ENCODE measurements at regions of chr1 and their contacts with region 1.

Region 1: GRCh38 chr1:243255791-243256512 is at the start of gene SDCCAG8:
- DNase-seq: peak; percentile 99
- H3K4me3 ChIP-seq: peak within 1 kb of the TSS; percentile 93
- H3K27ac ChIP-seq: peak within 1 kb of the TSS; percentile 85
- H3K4me1 ChIP-seq: peaks cover 33% of the 10 kb centered on the region
- CTCF ChIP-seq: no peak
- total RNA-seq, gene SDCCAG8: 13.4 and 18.1 TPM in 2 replicates

Region 2: DNA sequence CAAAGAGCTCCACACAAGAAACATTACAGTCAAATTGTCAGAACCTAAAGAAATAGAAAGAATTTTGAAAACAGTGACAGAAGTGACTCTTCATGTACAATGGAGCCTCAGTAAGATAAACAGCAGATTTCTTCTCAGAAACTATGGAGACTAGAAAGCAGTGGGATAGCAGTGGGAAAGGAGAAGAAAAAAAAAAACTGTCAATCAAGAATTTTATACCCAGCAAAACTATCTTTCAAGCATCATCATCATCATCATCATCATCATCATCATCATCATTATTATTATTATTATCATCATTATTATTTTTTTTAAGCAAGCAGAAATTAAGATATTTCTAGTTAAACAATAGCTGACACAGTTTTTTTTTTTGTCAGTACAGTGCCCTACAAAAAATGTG is 25.0 kb before region 1 on chr1:
- CTCF ChIA-PET with region 1: interaction called, 6 read pairs
- POLR2A ChIA-PET with region 1: interaction called, 11 read pairs
- intact Hi-C with region 1: no loop called
- DNase-seq: peak; percentile 46
- H3K4me3 ChIP-seq: no peak overlapping the region
- H3K27ac ChIP-seq: no peak overlapping the region
- H3K4me1 ChIP-seq: peaks cover 2% of the 10 kb centered on the region
- CTCF ChIP-seq: no peak

Region 3: DNA sequence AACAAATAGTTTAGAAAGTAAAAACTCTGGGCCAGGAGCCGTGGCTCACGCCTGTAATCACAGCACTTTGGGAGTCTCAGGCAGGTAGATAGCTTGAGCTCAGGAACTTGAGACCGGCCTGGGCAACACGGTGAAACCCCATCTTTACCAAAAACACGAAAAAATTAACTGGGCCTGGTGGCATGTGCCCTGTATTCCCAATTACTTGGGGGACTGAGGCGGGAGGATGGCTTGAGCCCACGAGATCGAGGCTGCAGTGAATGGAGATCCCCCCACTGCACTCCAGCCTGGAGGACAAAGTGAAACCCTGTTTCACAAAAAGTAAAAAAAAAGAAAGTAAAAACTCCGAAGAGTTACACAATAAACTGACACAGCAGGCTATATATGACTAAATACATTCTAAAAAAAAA is 11.5 kb before region 1 on chr1:
- CTCF ChIA-PET with region 1: interaction called, 3 read pairs
- POLR2A ChIA-PET with region 1: interaction called, 37 read pairs
- intact Hi-C with region 1: no loop called
- DNase-seq: no peak
- H3K4me3 ChIP-seq: peak overlapping the region; percentile 37
- H3K27ac ChIP-seq: no peak overlapping the region
- H3K4me1 ChIP-seq: peaks cover 33% of the 10 kb centered on the region
- CTCF ChIP-seq: no peak

Region 4: DNA sequence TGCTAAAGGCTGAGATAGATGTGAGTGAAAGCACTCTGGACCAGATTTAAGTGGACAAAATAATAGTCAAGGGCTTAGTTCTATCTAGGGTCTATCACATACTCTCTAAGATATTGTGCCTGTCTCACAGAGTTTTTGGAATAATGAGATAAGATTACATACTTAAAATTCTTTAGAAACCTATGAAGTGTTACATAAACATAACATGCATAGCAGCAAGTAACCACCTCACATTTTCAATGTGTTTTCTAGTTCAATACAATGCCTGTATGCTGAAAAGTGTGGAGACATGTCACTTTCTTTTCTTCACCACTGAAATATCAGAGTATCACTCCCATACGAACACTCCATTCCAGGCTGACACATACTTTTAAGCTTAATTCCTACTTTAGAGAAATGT is 16.0 kb after region 1 on chr1:
- CTCF ChIA-PET with region 1: interaction called, 3 read pairs
- POLR2A ChIA-PET with region 1: interaction called, 14 read pairs
- intact Hi-C with region 1: no loop called
- DNase-seq: no peak
- H3K4me3 ChIP-seq: no peak overlapping the region
- H3K27ac ChIP-seq: no peak overlapping the region
- H3K4me1 ChIP-seq: peaks cover 29% of the 10 kb centered on the region
- CTCF ChIP-seq: no peak

Region 5: DNA sequence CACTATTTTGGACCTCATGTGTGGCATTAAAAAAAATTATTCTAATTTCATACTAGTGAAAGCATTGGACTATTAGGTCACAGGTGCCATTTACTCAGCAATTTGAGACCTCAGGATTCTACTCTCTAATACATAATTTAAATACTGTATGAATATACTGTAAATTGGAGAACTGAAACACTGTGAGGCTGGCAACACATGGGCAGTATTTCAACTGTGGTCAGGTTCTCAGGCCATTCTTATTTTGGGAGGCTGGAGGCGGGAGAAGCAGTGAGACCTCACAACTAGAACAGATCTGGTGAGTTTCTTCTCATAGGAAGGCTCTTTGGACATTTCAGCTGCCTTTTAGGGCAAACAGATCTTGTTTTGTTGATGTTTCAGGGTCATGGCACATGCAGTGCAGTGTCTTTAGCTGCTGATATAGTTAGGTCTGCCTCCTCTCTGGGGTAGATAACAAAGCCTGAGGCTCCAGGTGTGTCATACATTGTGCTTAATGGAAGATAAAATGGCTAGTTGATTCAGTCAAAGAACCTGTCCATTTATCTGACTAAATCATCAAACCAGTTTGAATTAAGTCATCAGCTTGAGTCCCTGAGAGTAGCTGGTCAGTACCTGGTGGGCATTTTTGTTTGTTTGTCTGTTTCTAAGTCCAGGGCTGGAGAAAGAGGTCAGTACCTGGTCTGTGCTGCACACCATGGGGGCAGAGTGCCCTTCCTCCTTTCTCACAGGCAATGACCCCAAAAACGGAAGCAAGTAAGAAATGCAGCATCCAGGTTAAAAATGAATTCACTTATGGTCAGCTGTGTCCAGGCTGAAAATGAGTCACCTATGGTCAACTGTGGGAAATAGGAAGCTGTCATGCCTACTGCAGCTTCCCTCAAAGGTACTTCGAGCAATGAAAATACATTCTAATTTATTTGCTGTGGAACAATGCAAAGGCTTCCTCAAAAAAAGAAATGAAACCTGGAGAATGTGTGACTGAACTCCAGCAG is 216.1 kb after region 1 on chr1:
- CTCF ChIA-PET with region 1: no interaction called
- POLR2A ChIA-PET with region 1: no interaction called
- intact Hi-C with region 1: no loop called
- DNase-seq: no peak
- H3K4me3 ChIP-seq: no peak overlapping the region
- H3K27ac ChIP-seq: no peak overlapping the region
- H3K4me1 ChIP-seq: peaks cover 7% of the 10 kb centered on the region
- CTCF ChIP-seq: no peak

Region 6: DNA sequence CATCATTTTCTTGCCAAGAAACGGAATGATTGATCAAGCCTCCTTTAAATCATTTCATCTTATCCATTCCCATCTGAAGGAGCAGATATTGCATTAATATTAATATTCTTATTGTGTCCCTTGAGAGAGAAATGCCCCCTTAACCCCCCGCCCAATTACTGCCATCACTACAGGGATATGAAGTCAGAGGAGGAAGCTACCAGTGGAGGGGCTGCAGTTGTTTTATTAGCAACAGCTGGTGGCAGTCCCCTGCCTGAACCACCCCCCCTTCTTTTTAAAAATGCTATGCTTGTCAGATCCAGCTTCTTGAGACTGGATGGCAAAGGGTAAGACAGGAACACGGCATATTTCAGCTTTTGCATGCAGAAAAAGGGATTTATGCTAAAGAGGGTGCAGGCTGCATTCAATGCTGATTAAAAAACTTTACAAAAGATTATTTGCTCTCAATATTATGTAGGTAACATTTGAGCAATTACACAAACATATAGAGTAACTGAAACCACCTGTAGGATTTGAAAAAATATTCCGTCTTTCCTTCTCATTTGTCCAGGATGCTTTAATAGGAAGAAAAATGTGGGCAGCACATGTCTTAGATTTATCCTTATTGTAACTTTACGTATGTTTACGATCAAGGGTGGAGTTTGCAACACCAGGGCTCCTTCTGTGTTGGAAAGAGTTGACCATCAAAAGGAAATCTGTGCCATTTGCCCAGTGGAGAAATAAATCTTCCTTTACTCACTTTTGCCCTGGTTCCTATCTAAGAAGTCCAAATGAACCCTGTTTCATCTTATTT is 872.8 kb after region 1 on chr1:
- CTCF ChIA-PET with region 1: no interaction called
- POLR2A ChIA-PET with region 1: no interaction called
- intact Hi-C with region 1: no loop called
- DNase-seq: no peak
- H3K4me3 ChIP-seq: no peak overlapping the region
- H3K27ac ChIP-seq: no peak overlapping the region
- H3K4me1 ChIP-seq: no peaks in the 10 kb centered on the region
- CTCF ChIP-seq: no peak

Measured in OCI-LY7 (cell line).